Prostate gland (tissue), 2 donors: ENCODE measurements at regions of chr10 and their contacts with region 1.

Region 1: DNA sequence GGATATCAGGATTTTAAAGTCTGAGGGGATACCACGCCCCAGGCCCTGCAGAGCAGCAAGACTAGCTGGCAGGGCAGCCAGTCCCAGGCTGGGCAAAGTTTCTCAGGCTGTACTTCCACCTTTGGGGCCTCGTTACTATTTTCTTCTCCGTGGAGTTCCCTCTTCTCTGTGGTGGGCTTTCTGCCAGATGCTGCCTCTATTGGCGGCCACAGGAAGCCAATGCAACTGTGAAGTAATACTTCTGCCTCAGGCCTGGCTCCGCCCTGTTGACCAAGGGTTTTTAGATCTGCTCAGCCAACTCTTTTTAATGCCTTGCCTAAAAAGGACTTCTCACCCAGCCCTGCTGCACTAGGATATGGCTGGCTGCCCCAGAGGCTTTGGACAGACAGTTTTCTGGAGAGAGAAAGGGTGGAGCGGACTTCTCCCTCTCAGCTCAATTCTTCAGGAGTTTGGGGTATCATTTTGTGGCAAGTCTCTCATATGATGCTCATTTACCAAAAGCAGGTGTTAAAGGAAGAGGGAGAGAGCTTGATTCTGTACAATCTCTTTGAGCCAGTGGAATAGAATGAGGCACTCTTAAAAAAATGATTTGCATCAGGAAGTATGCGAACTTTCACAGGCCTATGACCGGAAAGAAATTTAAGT is 67.4 kb downstream of the HHEX start:
- DNase-seq: peak; percentile 61
- H3K4me3 ChIP-seq: no peak overlapping the region
- H3K27ac ChIP-seq: peak overlapping the region; percentile 30 to 41
- H3K4me1 ChIP-seq: no peaks in the 10 kb centered on the region
- H3K27me3 ChIP-seq: no peaks in the 10 kb centered on the region
- CTCF ChIP-seq: peak in 1 of 4 experiments; percentile 25
- POLR2A ChIP-seq: no peak

Region 2: DNA sequence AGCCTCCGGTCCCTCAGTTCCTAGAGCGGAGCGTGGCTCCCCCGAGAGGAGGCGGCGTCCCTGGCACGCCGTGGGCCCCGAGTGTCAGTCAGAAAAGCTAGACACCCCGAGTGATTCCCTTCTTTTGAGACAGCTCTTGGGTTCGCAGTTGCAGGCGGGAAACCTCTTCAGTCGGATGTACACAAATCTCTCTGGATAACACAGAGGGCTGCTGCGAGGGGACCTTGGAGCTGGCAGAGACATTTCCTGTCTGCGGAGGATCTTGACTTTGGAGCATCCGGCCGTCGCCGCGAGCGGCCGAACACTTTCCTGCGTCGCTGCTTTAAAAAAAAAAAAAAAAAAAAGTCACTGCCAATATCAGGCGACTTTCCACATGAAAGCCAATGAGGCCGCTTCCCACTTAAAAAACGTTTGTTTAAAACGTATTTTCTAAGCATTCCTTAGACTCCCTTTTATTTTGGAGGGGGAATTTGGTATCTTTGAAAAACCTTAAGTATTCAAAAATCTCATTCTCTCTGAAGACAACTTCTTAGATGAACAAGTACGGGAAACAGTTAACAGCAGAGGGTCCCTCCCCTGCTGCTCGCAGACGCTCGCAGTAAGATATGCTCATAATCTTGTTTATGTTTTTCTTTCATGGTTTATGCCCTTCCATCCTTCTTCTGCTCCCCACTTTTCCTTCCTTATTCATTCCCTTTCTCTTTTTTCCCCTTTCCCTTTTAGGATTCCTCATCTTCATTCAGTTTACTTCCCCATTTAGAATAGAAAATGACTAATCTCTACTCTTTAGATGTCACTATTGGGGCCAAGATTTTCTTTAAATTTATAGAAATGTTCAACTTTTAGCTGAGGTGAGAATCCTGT is 57.4 kb before region 1 on chr10:
- intact Hi-C with region 1: loop called (anchors 5 kb)
- DNase-seq: no peak
- H3K4me3 ChIP-seq: peak overlapping the region; percentile 18 to 25
- H3K27ac ChIP-seq: no peak overlapping the region
- H3K4me1 ChIP-seq: no peaks in the 10 kb centered on the region
- H3K27me3 ChIP-seq: no peaks in the 10 kb centered on the region
- CTCF ChIP-seq: no peak
- POLR2A ChIP-seq: no peak

Region 3: DNA sequence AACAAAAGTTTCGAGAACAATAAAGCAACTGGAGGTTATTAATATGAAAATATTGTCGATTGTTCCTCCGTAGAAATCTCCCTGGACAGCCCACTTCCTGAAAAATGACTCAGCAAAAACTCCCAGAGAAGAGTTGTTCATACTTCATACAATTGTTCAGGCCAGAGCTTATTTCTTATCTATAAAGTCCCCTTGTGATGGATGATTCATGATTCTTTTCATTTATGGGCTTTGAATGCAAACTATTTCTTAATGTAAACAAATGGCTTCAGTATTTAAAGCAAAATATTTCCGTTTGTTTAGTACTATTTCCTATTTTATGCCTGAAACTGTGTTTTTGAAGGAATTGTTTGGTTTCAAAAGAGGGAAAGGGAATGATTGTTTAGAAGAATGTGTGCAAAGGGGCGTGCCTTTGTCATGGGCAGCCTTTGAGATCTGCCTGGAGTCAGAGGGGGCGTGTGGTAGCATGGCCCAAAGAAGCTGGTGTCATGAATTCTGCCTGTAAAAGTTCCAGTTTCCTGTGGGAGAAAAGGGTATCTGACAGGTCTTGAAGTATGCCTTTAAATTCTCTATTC is 65.0 kb after region 1 on chr10:
- intact Hi-C with region 1: loop called (anchors 10 kb)
- DNase-seq: no peak
- H3K4me3 ChIP-seq: no peak overlapping the region
- H3K27ac ChIP-seq: no peak overlapping the region
- H3K4me1 ChIP-seq: no peaks in the 10 kb centered on the region
- H3K27me3 ChIP-seq: no peaks in the 10 kb centered on the region
- CTCF ChIP-seq: no peak
- POLR2A ChIP-seq: no peak

Region 4: DNA sequence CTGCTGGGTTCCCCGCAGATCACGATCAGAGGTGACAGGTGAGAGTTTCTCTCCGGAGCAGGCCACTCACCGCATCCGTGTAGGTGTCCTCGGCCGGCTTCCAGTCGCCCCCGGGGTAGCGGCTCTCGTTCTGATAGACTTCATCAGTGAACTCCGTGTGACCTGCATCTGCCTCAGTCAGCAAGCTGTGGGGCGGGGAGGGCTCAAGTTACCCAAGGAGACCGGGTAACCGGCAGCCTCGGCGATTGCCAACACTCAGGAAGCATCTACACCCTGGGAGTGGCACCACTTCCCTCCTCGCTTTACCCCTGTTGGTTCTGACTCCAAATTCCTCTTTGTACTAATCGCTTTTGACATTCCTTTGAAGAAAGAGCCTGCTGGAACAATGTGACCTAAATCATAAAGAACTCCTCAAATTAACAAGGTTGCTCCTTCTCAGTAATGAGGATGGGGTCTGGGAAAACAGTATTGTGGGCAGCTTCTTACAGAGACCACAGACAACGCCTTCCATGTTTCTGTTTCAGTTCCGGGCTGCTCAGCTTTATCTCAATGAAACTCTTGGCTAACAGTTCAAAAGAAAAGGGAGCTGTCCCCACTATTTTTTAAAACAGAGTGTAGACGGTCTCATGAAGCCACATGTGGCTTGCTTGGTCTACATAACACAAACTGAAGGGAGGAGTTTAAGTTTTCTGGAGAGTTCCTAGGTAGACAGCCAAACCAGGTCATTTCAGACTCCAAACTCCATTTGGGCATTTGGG is 606.9 kb after region 1 on chr10:
- intact Hi-C with region 1: no loop called
- DNase-seq: no peak
- H3K4me3 ChIP-seq: no peak overlapping the region
- H3K27ac ChIP-seq: no peak overlapping the region
- H3K4me1 ChIP-seq: no peaks in the 10 kb centered on the region
- H3K27me3 ChIP-seq: no peaks in the 10 kb centered on the region
- CTCF ChIP-seq: no peak
- POLR2A ChIP-seq: no peak